Panc1 (cell line): ENCODE measurements at regions of chr1 and their contacts with region 1.

Region 1: DNA sequence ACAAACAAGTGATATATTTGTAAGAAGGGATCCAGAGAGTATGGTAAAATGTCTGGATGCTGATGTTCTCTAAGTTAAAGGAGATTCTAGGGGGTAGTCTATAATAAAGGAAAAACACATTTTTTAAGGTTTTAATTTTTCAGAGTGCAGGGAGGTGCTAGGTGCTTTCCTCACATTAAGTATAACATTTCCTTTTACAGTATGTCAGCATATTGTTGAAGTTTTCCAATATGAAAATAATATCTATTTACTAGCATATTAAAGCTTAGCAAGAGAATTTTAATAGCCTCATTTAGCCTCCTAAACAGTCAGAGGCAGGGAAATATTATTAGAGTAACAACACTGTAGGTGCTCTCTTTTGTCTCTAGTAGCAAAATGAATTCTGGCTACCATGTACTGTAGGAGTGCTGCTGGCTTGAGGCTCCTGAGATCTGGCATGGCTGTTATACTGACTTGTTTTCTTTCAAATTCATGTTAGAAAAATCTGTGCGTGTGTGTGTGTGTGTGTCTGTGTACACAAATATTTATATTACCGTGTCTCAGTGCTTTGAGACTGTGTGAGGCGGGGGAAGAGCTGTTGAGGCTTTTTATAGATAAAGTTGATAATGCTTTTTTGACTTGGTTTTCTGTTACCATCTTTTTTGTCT is 71.0 kb downstream of the POU2F1 start:
- DNase-seq: no peak
- ATAC-seq: no peak
- H3K4me3 ChIP-seq: no peak overlapping the region
- H3K27ac ChIP-seq: no peak overlapping the region
- H3K4me1 ChIP-seq: no peaks in the 10 kb centered on the region
- H3K27me3 ChIP-seq: no peaks in the 10 kb centered on the region
- CTCF ChIP-seq: no peak

Region 2: DNA sequence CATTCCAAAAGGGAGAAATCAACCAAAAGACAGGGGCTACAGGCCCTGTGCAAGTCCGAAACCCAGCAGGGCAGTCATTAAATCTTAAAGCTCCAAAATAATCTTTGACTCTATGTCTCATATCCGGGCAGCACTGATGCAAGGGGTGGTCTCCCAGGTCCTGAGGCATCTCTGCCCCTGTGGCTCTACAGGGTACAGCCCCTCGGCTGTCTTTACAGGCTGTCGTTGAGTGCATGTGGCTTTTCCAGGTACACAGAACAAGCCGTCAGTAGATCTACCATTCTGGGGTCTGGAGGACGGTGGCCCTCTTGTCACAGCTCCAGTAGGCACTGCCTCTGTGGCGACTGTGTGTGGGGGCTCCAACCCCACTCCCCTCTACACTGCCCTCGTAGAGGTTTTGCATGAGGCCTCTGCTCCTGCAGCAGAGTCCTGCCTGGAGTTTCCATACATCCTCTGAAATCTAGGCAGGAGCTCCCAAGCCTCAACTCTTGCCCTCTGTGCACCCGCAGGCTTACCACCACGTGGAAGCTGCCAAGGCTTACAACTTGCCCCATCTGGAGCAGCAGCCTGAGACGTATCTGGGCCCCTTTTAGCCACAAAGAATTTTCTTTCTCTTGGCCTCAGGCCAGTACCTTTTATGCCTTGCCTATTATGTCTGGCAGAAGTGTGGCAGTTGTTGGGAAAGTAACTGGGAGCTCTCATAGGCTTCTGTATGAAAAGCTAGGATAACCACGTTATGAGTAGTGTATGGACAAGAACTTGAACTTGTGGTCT is 18.4 kb before region 1 on chr1:
- CTCF ChIA-PET with region 1: no interaction called
- POLR2A ChIA-PET with region 1: interaction called, 10 read pairs
- in situ Hi-C with region 1: no loop called
- intact Hi-C with region 1: no loop called
- DNase-seq: no peak
- ATAC-seq: peak; percentile 69
- H3K4me3 ChIP-seq: no peak overlapping the region
- H3K27ac ChIP-seq: peak overlapping the region; percentile 45; the same call in 1 of the 2 replicates
- H3K4me1 ChIP-seq: peaks cover 16% of the 10 kb centered on the region
- H3K27me3 ChIP-seq: no peaks in the 10 kb centered on the region
- CTCF ChIP-seq: no peak

Region 3: DNA sequence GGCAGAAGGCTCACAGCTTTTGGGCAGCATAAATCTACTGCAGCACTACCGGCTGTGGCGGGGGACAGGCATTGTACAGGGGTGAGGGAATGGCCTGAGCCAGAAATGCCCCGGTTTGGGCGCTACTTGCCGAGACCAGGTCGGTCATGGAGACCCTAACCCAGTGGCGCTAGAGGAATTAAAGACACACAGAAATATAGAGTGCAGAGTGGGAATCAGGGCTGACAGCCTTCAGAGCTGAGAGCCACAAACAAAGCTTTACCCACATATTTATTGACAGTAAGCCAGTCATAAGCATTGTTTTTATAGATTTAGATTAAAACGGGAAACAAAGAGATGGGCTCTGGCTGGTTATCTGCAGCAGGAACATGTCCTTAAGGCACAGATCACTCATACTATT is 30.8 kb after region 1 on chr1:
- CTCF ChIA-PET with region 1: no interaction called
- POLR2A ChIA-PET with region 1: no interaction called
- in situ Hi-C with region 1: loop called (anchors 5 kb)
- intact Hi-C with region 1: no loop called
- DNase-seq: no peak
- ATAC-seq: no peak
- H3K4me3 ChIP-seq: no peak overlapping the region
- H3K27ac ChIP-seq: no peak overlapping the region
- H3K4me1 ChIP-seq: no peaks in the 10 kb centered on the region
- H3K27me3 ChIP-seq: no peaks in the 10 kb centered on the region
- CTCF ChIP-seq: no peak